GM10248 (cell line): ENCODE measurements at regions of chr4 and their contacts with region 1.

Region 1: DNA sequence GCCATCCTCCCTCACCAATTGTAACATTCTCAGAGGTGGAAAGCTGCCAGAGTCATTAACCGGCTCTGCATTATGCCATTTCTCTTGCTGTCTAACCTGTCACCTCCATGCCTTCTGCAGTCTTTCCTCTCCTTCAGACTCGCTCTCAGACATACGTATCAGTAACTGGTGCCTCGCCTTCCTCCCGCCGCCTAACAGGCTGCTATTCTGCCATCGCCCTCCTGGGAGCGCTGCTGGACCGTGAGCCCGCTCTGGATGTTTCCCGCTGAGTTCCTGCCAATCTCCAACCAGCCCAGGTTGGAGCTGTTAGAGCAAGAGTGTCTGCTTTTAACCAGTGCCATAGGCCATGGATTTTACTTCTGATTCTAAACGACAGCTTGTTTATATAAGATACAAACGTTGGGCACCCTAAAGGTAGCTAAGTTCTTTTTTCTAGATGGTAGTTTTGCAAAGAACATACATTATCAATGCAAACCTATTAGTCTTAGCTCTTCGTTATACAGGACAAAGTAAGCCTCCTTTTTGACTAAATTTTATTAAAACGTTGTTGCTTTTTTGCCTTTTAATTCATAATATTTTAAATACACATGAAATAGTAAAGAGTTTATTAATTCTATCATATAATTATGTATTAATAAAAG is 59.5 kb upstream of the NEIL3 start:
- DNase-seq: peak; percentile 57
- CTCF ChIP-seq: peak; percentile 97

Region 2: GRCh38 chr4:177239878-177240277 is 10.3 kb before region 1 on chr4:
- CTCF ChIA-PET with region 1: interaction called, 18 read pairs
- POLR2A ChIA-PET with region 1: no interaction called
- DNase-seq: no peak
- CTCF ChIP-seq: no peak

Region 3: DNA sequence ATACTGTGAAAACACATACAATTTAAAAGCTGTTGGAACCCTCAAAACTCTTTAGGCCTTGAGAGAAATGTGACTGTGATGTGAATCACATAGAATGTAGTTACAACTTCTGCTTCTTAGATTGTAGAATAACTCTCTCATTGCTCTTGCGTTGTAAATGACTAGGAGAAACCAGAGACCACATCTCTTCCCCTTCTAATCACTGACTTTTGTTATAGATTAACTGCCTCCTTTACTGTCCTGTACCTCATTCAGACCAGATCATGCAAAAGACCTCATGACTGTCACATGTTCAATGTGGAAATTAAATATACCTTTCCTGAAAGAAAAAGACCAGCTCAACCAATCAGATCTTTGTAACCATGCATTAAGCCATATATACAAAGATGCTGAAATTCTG is 16.3 kb after region 1 on chr4:
- CTCF ChIA-PET with region 1: interaction called, 26 read pairs
- POLR2A ChIA-PET with region 1: no interaction called
- DNase-seq: no peak
- CTCF ChIP-seq: no peak

Region 4: GRCh38 chr4:177309522-177310371 is 59.6 kb after region 1 on chr4 and contains the start of gene NEIL3:
- CTCF ChIA-PET with region 1: interaction called, 10 read pairs
- POLR2A ChIA-PET with region 1: no interaction called
- DNase-seq: peak; percentile 94
- CTCF ChIP-seq: no peak

Region 5: GRCh38 chr4:177322266-177322665 is 72.1 kb after region 1 on chr4:
- CTCF ChIA-PET with region 1: interaction called, 12 read pairs
- POLR2A ChIA-PET with region 1: no interaction called
- DNase-seq: no peak
- CTCF ChIP-seq: no peak

Region 6: DNA sequence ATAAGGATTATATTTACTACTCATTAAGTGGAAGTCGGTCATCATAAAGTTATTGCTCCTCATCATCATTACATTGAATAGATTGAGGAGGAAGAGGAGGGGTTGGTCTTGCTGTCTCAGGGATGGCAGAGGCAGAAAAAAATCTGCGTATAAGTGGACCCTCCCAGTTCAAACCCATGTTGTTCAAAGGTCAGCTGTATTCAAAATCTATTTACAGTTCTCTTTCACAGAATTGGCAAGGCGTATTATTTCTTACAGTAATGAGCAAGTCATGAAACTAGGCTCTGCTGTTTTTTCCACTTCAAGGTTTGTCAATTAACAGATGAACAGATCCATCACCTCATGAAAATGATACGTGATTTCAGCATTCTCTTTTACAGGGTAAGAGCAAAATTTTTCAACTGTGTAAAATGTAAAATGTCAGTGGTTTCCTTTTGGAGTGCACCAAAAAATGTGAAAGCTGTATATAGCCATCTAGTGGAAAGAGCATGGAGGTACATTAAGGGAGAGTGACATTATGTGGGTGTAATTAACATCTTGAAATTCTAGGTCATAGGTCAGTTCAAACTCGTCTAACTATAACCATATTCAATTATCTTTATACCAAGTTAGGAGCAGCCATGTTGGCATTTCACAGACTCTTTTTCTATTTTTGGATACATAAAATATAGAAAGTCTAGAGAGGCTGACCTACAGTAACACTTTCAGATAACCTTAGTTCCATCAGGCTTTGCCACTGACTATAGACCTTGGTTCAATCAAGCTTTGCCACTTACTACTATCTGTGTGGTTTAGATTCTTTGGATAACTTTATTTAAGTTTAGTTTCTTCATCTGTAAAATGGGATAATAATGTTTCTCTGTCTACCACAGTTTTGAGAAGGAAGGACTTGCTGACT is 89.5 kb after region 1 on chr4:
- CTCF ChIA-PET with region 1: interaction called, 78 read pairs
- POLR2A ChIA-PET with region 1: no interaction called
- DNase-seq: peak; percentile 32
- CTCF ChIP-seq: peak; percentile 43